Calu3 (cell line): ENCODE measurements at regions of chr9 and their contacts with region 1.

Region 1: GRCh38 chr9:31799953-31800609 is 584.4 kb upstream of the ACO1 start:
- DNase-seq: no peak
- H3K4me3 Mint-ChIP-seq: no peak overlapping the region
- H3K27ac Mint-ChIP-seq: no peak overlapping the region
- H3K4me1 Mint-ChIP-seq: no peaks in the 10 kb centered on the region
- H3K27me3 Mint-ChIP-seq: no peaks in the 10 kb centered on the region
- CTCF ChIP-seq: no peak

Region 2: GRCh38 chr9:29830821-29831220 is 1969.3 kb before region 1 on chr9:
- CTCF ChIA-PET with region 1: no interaction called
- intact Hi-C with region 1: loop called (anchors 5 kb)
- DNase-seq: peak; percentile 54
- H3K4me3 Mint-ChIP-seq: no peak overlapping the region
- H3K27ac Mint-ChIP-seq: no peak overlapping the region
- H3K4me1 Mint-ChIP-seq: no peaks in the 10 kb centered on the region
- H3K27me3 Mint-ChIP-seq: no peaks in the 10 kb centered on the region
- CTCF ChIP-seq: peak; percentile 42

Region 3: GRCh38 chr9:31119882-31120454 is 680.1 kb before region 1 on chr9:
- CTCF ChIA-PET with region 1: no interaction called
- intact Hi-C with region 1: loop called (anchors 1 kb)
- DNase-seq: peak; percentile 11
- H3K4me3 Mint-ChIP-seq: no peak overlapping the region
- H3K27ac Mint-ChIP-seq: no peak overlapping the region
- H3K4me1 Mint-ChIP-seq: no peaks in the 10 kb centered on the region
- H3K27me3 Mint-ChIP-seq: no peaks in the 10 kb centered on the region
- CTCF ChIP-seq: peak; percentile 40

Region 4: DNA sequence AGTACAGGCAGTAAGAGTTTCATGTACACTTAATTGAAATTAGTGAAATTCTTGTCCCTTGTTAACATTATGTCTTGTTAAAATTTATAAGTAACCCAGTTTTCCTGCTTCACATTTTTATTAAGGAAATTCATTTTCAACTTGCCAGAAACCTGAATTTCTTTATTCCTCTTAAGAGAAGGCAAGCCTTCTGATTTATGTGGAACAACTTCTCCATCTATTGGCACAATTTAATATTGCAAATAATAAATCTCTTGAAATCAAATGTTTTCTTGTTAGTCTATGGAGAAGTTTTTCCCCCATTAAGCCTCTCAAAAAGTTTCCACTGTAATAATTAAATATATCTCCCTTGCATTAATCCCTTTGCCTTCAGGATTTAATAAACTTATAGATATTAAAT is 550.6 kb after region 1 on chr9:
- CTCF ChIA-PET with region 1: no interaction called
- intact Hi-C with region 1: loop called (anchors 10 kb)
- DNase-seq: no peak
- H3K4me3 Mint-ChIP-seq: no peak overlapping the region
- H3K27ac Mint-ChIP-seq: no peak overlapping the region
- H3K4me1 Mint-ChIP-seq: no peaks in the 10 kb centered on the region
- H3K27me3 Mint-ChIP-seq: no peaks in the 10 kb centered on the region
- CTCF ChIP-seq: no peak